Naive thymus-derived CD4-positive, alpha-beta T cell (primary cell): ENCODE measurements at regions of chr20 and their contacts with region 1.

Region 1: GRCh38 chr20:3156811-3157619 is 2.6 kb downstream of the FASTKD5 start:
- DNase-seq: peak in 7 of 9 donors; percentile 34 to 70 (median 57)
- ATAC-seq: peak; percentile 86
- H3K4me3 ChIP-seq: peak overlapping the region; percentile 27
- H3K4me3 Mint-ChIP-seq: peak overlapping the region; percentile 69 to 99 (median 86)
- H3K27ac ChIP-seq: peak overlapping the region; percentile 50
- H3K27ac Mint-ChIP-seq: peak overlapping the region; percentile 81 to 99 (median 89)
- H3K4me1 ChIP-seq: peaks cover 18 to 35% of the 10 kb centered on the region in 2 donors
- H3K4me1 Mint-ChIP-seq: peaks cover 46 to 82% (median 67%) of the 10 kb centered on the region in 7 donors
- H3K27me3 ChIP-seq: no peaks in the 10 kb centered on the region
- H3K27me3 Mint-ChIP-seq: no peaks in the 10 kb centered on the region

Region 2: DNA sequence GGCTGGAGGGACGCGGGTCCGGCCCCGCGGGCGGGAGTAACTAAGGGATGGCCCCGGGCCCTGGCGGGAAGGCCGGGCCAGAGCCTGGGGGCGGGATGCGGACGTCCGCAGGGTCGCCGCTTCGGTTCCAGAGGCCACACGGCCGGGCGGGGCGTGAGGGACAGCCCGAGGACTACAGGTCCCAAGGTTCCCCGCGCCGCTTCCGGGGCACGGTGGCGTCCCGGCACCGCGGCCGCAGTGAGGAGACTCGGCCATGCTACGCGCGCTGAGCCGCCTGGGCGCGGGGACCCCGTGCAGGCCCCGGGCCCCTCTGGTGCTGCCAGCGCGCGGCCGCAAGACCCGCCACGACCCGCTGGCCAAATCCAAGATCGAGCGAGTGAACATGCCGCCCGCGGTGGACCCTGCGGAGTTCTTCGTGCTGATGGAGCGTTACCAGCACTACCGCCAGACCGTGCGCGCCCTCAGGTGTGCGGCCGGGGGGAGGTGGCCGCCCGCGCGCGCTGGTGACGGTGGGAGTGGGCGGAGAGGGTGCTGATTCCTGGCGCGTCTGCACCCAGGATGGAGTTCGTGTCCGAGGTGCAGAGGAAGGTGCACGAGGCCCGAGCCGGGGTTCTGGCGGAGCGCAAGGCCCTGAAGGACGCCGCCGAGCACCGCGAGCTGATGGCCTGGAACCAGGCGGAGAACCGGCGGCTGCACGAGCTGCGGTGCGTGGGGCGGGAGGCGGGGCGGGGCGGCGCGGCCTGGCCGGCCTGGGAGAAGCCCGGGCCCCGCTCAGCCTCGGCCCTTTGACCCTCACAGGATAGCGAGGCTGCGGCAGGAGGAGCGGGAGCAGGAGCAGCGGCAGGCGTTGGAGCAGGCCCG is 111.0 kb before region 1 on chr20 and contains the start of gene MRPS26:
- CTCF ChIA-PET with region 1: no interaction called
- POLR2A ChIA-PET with region 1: interaction called, 3 read pairs
- intact Hi-C with region 1: loop called in 1 of 2 experiments (anchors 5 kb)
- DNase-seq: peak; percentile 63 to 89 (median 76)
- ATAC-seq: peak; percentile 93
- H3K4me3 ChIP-seq: peak within 1 kb of the TSS; percentile 91
- H3K4me3 Mint-ChIP-seq: peak within 1 kb of the TSS; percentile 82 to 95 (median 92)
- H3K27ac ChIP-seq: peak within 1 kb of the TSS; percentile 70
- H3K27ac Mint-ChIP-seq: peak within 1 kb of the TSS; percentile 69 to 90 (median 79)
- H3K4me1 ChIP-seq: peaks cover 4 to 11% of the 10 kb centered on the region in 2 donors
- H3K4me1 Mint-ChIP-seq: peaks cover 11 to 23% (median 18%) of the 10 kb centered on the region in 7 donors
- H3K27me3 ChIP-seq: no peaks in the 10 kb centered on the region
- H3K27me3 Mint-ChIP-seq: no peaks in the 10 kb centered on the region
- total RNA-seq, gene MRPS26: 22.2 to 41.6 (median 29.5) TPM

Region 3: DNA sequence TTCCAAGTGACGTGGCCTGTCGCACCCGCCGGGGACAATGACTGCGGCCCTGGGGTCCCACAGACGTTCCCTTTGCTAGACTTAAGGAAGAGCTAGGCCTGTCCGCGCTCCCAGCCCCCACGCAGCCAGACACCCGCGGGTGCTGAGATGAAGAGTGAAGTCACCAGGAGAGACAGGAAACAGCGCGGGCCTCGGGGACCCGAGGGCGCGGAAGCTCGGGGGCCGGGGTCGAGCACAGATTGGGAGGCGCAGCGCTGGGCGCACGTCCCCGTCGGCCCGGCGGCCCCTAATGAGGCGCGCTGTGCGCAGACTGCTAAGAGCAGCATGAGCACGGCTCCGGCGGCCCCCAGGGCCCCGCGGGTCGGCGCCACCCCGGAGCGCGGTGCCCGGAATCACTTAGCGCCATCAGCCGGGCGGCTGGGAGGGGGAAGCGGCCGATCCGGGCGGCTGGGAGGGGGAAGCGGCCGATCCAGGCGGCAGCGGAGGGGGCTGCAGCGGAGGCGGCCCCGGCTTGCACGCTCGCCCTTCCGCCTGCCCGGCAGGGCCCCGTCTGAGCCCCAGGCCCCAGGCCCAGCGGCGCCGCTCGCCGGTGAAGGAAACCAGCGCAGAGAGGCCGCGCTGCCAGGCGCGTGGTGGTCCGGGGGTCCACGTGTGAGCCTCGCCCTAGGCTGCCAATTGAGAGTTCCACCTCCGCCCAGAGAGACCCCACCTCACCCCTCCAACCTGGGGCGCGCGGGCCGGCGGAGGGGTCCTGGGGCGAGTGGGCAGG is 64.2 kb before region 1 on chr20:
- CTCF ChIA-PET with region 1: interaction called, 5 read pairs
- POLR2A ChIA-PET with region 1: interaction called, 23 read pairs
- intact Hi-C with region 1: loop called in 1 of 2 experiments (anchors 1 kb)
- DNase-seq: peak in 8 of 9 donors; percentile 41 to 75 (median 70)
- ATAC-seq: peak; percentile 27
- H3K4me3 ChIP-seq: peak overlapping the region; percentile 28
- H3K4me3 Mint-ChIP-seq: peak overlapping the region; percentile 78 to 97 (median 93)
- H3K27ac ChIP-seq: peak overlapping the region; percentile 95
- H3K27ac Mint-ChIP-seq: peak overlapping the region; percentile 88 to 100 (median 100)
- H3K4me1 ChIP-seq: peaks cover 0 to 24% of the 10 kb centered on the region in 2 donors
- H3K4me1 Mint-ChIP-seq: peaks cover 17 to 50% (median 31%) of the 10 kb centered on the region in 7 donors
- H3K27me3 ChIP-seq: no peaks in the 10 kb centered on the region
- H3K27me3 Mint-ChIP-seq: peaks cover 0 to 39% (median 0%) of the 10 kb centered on the region in 5 donors

Region 4: DNA sequence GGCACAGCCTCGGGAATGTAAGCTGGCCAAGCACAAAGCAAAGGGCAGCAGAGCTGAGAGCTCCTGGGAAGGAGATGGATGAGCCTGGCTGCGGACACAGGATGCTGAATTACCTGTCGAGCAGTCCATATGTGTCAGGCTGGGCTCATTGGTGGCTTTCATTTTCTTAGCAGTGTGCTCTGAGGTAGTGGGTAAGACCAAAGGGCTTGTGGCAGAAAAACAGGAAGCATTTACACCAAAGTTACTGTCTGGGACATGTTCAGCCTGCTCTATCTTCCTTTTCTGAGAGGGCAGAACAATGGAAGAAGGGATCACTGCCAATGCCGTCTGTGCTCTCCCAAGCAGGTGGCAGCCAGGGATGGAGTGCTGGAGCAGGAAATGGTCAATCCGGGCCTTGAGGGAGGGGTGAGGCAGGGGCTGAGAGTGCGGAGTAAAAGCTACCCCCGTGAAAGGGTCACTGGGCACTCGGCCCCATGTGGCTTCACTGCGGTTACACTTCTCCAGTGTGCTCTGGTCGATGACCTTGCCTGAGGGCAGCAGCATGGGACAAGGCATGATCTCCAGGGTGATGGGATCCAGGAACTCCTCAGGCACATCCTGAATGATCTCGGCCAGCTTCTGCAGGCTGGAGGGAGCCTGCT is 35.6 kb before region 1 on chr20:
- CTCF ChIA-PET with region 1: interaction called, 11 read pairs
- POLR2A ChIA-PET with region 1: interaction called, 40 read pairs
- intact Hi-C with region 1: loop called (anchors 1 kb)
- DNase-seq: peak in 7 of 9 donors; percentile 49 to 75 (median 72)
- ATAC-seq: peak; percentile 85
- H3K4me3 ChIP-seq: peak overlapping the region; percentile 46
- H3K4me3 Mint-ChIP-seq: peak overlapping the region; percentile 68 to 91 (median 83)
- H3K27ac ChIP-seq: peak overlapping the region; percentile 82
- H3K27ac Mint-ChIP-seq: peak overlapping the region; percentile 97 to 100 (median 99)
- H3K4me1 ChIP-seq: peaks cover 5 to 37% of the 10 kb centered on the region in 2 donors
- H3K4me1 Mint-ChIP-seq: peaks cover 22 to 66% (median 51%) of the 10 kb centered on the region in 7 donors
- H3K27me3 ChIP-seq: no peaks in the 10 kb centered on the region
- H3K27me3 Mint-ChIP-seq: no peaks in the 10 kb centered on the region

Region 5: GRCh38 chr20:3204124-3204822 is 47.3 kb after region 1 on chr20 and contains the start of gene DDRGK1:
- CTCF ChIA-PET with region 1: no interaction called
- POLR2A ChIA-PET with region 1: interaction called, 6 read pairs
- intact Hi-C with region 1: loop called (anchors 1 kb)
- DNase-seq: peak; percentile 79 to 95 (median 90)
- ATAC-seq: peak; percentile 96
- H3K4me3 ChIP-seq: peak within 1 kb of the TSS; percentile 99
- H3K4me3 Mint-ChIP-seq: peak within 1 kb of the TSS; percentile 91 to 97 (median 95)
- H3K27ac ChIP-seq: peak within 1 kb of the TSS; percentile 91
- H3K27ac Mint-ChIP-seq: peak within 1 kb of the TSS; percentile 91 to 98 (median 96)
- H3K4me1 ChIP-seq: peaks cover 12 to 18% of the 10 kb centered on the region in 2 donors
- H3K4me1 Mint-ChIP-seq: peaks cover 21 to 26% (median 22%) of the 10 kb centered on the region in 7 donors
- H3K27me3 ChIP-seq: no peaks in the 10 kb centered on the region
- H3K27me3 Mint-ChIP-seq: no peaks in the 10 kb centered on the region
- total RNA-seq, gene DDRGK1: 39.4 to 60.3 (median 46.6) TPM

Region 6: GRCh38 chr20:4152006-4152695 is 995.1 kb after region 1 on chr20:
- CTCF ChIA-PET with region 1: no interaction called
- POLR2A ChIA-PET with region 1: no interaction called
- intact Hi-C with region 1: no loop called
- DNase-seq: no peak
- ATAC-seq: peak; percentile 55
- H3K4me3 ChIP-seq: no peak overlapping the region
- H3K4me3 Mint-ChIP-seq: peak overlapping the region in 2 of 10 donors; percentile 52 to 54
- H3K27ac ChIP-seq: no peak overlapping the region
- H3K27ac Mint-ChIP-seq: peak overlapping the region in 2 of 9 donors; percentile 2 to 45
- H3K4me1 ChIP-seq: no peaks in the 10 kb centered on the region
- H3K4me1 Mint-ChIP-seq: peaks cover 9 to 41% (median 15%) of the 10 kb centered on the region in 7 donors
- H3K27me3 ChIP-seq: peaks cover 0 to 8% of the 10 kb centered on the region in 2 donors
- H3K27me3 Mint-ChIP-seq: peaks cover 22 to 39% (median 34%) of the 10 kb centered on the region in 5 donors